Activated CD4-positive, alpha-beta T cell treated with anti-CD3 and anti-CD28 coated beads for 36 hours (primary cell): ENCODE measurements at regions of chr2 and their contacts with region 1.

Region 1: GRCh38 chr2:84970868-84971509 is at the start of gene KCMF1:
- DNase-seq: peak; percentile 83
- ATAC-seq: peak; percentile 69
- H3K4me3 Mint-ChIP-seq: peak within 1 kb of the TSS; percentile 98
- H3K27ac Mint-ChIP-seq: peak within 1 kb of the TSS; percentile 100
- H3K4me1 Mint-ChIP-seq: peaks cover 38% of the 10 kb centered on the region
- H3K27me3 Mint-ChIP-seq: no peaks in the 10 kb centered on the region
- total RNA-seq, gene KCMF1: 78.1 to 98.5 TPM

Region 2: DNA sequence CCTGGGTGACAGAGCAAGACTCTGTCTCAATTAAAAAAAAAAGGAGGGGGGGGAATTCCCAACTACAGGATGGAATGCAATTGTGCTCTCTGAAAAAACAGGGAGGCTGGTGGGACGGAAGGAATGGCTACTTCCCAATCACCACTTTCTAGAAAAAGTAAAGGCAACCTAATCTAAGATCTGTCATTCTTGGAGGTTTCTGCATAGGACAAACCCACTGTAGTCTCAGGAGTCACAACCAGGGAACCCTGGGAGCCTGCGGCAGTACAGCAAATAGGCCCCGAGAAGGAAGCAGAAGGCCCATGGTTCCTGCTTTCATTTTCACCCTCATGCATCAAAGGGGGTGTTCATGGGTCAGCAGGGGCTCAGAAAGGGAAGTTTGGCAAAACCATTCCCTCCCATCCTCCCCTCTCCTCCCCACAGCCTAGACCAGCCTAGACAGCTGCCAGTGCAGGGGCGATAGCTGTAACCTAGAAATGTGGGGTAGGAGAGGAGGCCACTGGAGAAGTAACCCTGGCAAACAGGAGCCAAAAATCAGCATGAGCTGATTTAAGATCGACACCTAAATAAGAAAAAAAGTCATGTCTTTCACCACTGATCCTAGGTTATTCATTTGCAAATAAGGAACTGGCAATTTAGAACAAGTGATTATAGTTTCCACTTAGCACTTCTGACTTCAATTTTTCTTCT is 138.1 kb before region 1 on chr2:
- CTCF ChIA-PET with region 1: no interaction called
- POLR2A ChIA-PET with region 1: no interaction called
- intact Hi-C with region 1: no loop called
- DNase-seq: peak; percentile 54
- ATAC-seq: peak; percentile 60
- H3K4me3 Mint-ChIP-seq: peak overlapping the region; percentile 46
- H3K27ac Mint-ChIP-seq: peak overlapping the region; percentile 91
- H3K4me1 Mint-ChIP-seq: peaks cover 35% of the 10 kb centered on the region
- H3K27me3 Mint-ChIP-seq: no peaks in the 10 kb centered on the region

Region 3: GRCh38 chr2:84946204-84947009 is 24.6 kb before region 1 on chr2:
- CTCF ChIA-PET with region 1: interaction called, 12 read pairs
- POLR2A ChIA-PET with region 1: interaction called, 9 read pairs
- intact Hi-C with region 1: loop called (anchors 1 kb)
- DNase-seq: peak; percentile 92
- ATAC-seq: peak; percentile 85
- H3K4me3 Mint-ChIP-seq: peak overlapping the region; percentile 67
- H3K27ac Mint-ChIP-seq: peak overlapping the region; percentile 99
- H3K4me1 Mint-ChIP-seq: peaks cover 49% of the 10 kb centered on the region
- H3K27me3 Mint-ChIP-seq: no peaks in the 10 kb centered on the region

Region 4: DNA sequence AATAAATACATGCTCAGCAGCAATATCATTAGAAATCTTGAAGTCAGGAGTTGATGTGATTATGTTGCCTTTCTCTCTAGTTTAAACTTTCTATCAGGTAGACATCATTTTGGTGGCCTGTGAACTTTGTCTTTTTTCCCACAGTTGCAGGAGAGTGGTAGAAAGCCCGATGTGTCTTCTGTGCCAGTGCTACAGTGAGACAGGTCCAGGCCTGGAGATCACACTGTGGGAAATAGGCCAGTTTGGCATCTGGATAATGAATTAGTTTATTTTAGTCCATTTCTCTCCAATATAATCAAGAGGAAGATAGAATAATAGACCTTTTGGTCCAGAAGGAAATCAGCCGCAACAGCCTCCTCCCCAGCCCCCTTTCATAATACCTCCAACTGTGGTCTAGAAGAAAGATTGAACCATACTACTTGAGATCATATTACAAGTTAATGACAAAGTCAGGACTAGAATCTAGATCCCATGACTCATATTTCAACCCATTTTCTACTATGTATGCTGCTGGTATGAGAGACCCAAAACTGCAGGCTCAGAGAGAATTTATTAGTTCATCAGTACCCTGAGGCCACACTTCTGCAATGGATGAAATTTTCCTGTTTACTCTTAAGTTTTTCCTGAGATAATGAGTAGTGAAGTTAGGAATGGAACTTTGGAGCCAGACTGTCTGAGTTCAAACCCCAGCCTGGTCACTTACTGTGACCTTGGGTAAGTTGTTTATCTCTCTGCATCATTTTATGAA is 20.6 kb after region 1 on chr2:
- CTCF ChIA-PET with region 1: interaction called, 9 read pairs
- POLR2A ChIA-PET with region 1: interaction called, 6 read pairs
- intact Hi-C with region 1: loop called in 1 of 2 experiments (anchors 2 kb)
- DNase-seq: no peak
- ATAC-seq: peak; percentile 47
- H3K4me3 Mint-ChIP-seq: no peak overlapping the region
- H3K27ac Mint-ChIP-seq: no peak overlapping the region
- H3K4me1 Mint-ChIP-seq: peaks cover 41% of the 10 kb centered on the region
- H3K27me3 Mint-ChIP-seq: no peaks in the 10 kb centered on the region

Region 5: GRCh38 chr2:84999553-84999955 is 28.6 kb after region 1 on chr2:
- CTCF ChIA-PET with region 1: interaction called, 8 read pairs
- POLR2A ChIA-PET with region 1: interaction called, 4 read pairs
- intact Hi-C with region 1: loop called (anchors 2 kb)
- DNase-seq: no peak
- ATAC-seq: peak; percentile 31
- H3K4me3 Mint-ChIP-seq: peak overlapping the region; percentile 45
- H3K27ac Mint-ChIP-seq: peak overlapping the region; percentile 96
- H3K4me1 Mint-ChIP-seq: peaks cover 80% of the 10 kb centered on the region
- H3K27me3 Mint-ChIP-seq: no peaks in the 10 kb centered on the region

Region 6: GRCh38 chr2:85111819-85112281 is 140.9 kb after region 1 on chr2:
- CTCF ChIA-PET with region 1: no interaction called
- POLR2A ChIA-PET with region 1: no interaction called
- intact Hi-C with region 1: no loop called
- DNase-seq: no peak
- ATAC-seq: no peak
- H3K4me3 Mint-ChIP-seq: no peak overlapping the region
- H3K27ac Mint-ChIP-seq: no peak overlapping the region
- H3K4me1 Mint-ChIP-seq: no peaks in the 10 kb centered on the region
- H3K27me3 Mint-ChIP-seq: peaks cover 13% of the 10 kb centered on the region

Region 7: GRCh38 chr2:85318222-85319074 is 347.5 kb after region 1 on chr2:
- CTCF ChIA-PET with region 1: no interaction called
- POLR2A ChIA-PET with region 1: no interaction called
- intact Hi-C with region 1: no loop called
- DNase-seq: peak; percentile 70
- ATAC-seq: peak; percentile 88
- H3K4me3 Mint-ChIP-seq: peak overlapping the region; percentile 4
- H3K27ac Mint-ChIP-seq: peak overlapping the region; percentile 80
- H3K4me1 Mint-ChIP-seq: peaks cover 58% of the 10 kb centered on the region
- H3K27me3 Mint-ChIP-seq: no peaks in the 10 kb centered on the region